AG04449 (cell line): ENCODE measurements at regions of chr3 and their contacts with region 1.

Region 1: GRCh38 chr3:88113311-88114162 is 36.2 kb upstream of the C3orf38 start:
- DNase-seq: peak; percentile 31
- H3K4me3 ChIP-seq: no peak overlapping the region
- CTCF ChIP-seq: peak; percentile 63

Region 2: GRCh38 chr3:87958289-87958688 is 155.2 kb before region 1 on chr3:
- CTCF ChIA-PET with region 1: no interaction called
- POLR2A ChIA-PET with region 1: no interaction called
- DNase-seq: no peak
- H3K4me3 ChIP-seq: no peak overlapping the region
- CTCF ChIP-seq: no peak

Region 3: DNA sequence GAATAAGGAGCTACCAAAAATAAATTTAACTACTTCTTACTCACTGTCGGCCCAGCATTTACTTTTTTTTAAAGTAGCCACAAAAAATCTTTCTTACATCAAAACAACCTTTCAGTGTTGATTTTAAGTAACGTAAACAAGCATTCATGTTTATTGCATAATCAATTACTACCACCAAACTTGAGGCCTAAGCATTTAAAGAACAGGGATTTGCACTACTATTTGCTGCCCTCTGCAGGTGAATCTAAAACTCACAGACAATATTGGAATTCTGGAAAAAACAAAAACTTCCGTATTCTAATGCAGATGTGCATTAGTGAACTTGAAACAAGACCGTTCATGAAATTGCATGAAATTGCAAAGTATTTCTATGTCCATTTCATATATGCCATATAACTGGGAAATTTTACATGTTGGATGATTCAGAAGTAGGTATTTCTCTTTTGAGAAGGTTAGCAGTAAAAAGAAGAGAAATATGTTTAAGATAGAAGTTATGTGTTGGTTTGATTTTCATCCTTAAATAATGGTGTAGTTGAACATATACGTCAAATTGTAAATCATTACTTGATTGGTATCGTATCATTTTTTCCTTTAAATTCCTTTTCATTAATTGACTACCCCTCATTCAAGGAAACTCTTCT is 110.3 kb before region 1 on chr3:
- CTCF ChIA-PET with region 1: interaction called, 15 read pairs
- POLR2A ChIA-PET with region 1: no interaction called
- DNase-seq: no peak
- H3K4me3 ChIP-seq: no peak overlapping the region
- CTCF ChIP-seq: peak; percentile 46

Region 4: GRCh38 chr3:88044411-88044810 is 69.1 kb before region 1 on chr3:
- CTCF ChIA-PET with region 1: no interaction called
- POLR2A ChIA-PET with region 1: no interaction called
- DNase-seq: no peak
- H3K4me3 ChIP-seq: no peak overlapping the region
- CTCF ChIP-seq: no peak

Region 5: GRCh38 chr3:88093266-88093665 is 20.3 kb before region 1 on chr3:
- CTCF ChIA-PET with region 1: interaction called, 53 read pairs
- POLR2A ChIA-PET with region 1: no interaction called
- DNase-seq: no peak
- H3K4me3 ChIP-seq: no peak overlapping the region
- CTCF ChIP-seq: no peak

Region 6: DNA sequence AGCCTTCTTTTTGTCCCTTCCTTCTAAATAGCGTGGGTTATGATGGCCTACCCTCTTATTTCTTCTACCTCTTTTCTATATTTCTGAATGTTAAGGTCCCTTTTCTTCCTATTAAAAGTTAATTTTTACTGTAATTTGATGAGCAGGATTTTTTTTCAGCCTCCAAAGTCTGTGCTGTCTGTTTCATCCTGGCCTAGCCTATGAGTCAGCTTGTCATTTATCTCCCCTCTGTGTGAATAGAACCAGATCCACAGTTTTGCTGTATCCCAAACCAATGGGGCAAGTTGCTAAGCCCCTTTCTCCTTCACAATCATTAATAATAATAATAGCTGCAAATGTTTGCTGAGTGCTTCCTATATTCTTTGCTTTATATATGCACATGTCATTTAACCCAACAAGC is 18.2 kb after region 1 on chr3:
- CTCF ChIA-PET with region 1: interaction called, 49 read pairs
- POLR2A ChIA-PET with region 1: no interaction called
- DNase-seq: no peak
- H3K4me3 ChIP-seq: no peak overlapping the region
- CTCF ChIP-seq: no peak

Region 7: GRCh38 chr3:88149509-88150362 is 36.2 kb after region 1 on chr3 and contains the start of gene C3orf38:
- CTCF ChIA-PET with region 1: interaction called, 13 read pairs
- POLR2A ChIA-PET with region 1: no interaction called
- DNase-seq: peak; percentile 58
- H3K4me3 ChIP-seq: peak within 1 kb of the TSS; percentile 95
- CTCF ChIP-seq: no peak